ENCODE measurements at regions of chr3 and their contacts with region 1.

Region 1: DNA sequence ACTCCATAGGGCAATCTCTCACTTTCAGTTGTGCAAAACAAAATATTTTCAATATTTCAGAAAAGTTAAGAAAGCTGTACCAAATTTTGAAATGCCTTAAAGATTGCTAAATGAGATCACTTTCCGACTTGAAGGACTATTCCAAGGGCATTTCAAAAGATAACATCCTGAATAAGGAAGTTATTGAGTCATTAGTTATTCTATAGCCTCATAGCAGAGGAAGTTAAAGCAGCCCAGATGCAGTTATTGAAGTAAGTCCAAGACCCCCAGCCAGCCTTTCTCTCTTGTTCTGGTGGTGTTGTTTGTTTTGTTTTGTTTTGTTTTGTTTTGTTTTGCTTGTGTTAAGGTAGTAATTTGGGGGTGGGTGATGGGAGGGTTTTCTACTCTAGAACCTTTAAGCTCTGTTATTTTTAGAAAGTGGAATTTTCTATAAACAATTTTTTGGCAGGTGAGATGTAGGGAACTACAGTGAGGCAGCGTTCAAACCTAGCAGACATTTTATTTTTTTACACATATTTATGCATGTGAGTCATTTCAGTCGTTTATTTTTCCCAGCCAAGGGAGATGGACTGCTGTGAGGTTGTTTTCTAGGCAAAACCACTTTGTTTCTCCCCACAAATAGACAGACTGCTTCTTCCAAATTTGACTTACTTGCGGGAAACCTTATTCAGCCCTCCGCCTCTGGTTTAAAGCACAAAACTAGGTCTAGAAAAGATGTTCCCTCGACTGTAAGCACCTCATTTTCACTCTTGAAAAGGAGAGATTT is 216.3 kb upstream of the ARPP21 start:
- DNase-seq: peak; percentile 81
- H3K4me3 ChIP-seq: peak overlapping the region in 1 of 3 experiments; percentile 18
- H3K27ac ChIP-seq: peak overlapping the region; percentile 32
- H3K4me1 ChIP-seq: peaks cover 16% of the 10 kb centered on the region
- H3K27me3 ChIP-seq: peaks cover 18 to 20% of the 10 kb centered on the region in 2 experiments
- CTCF ChIP-seq: no peak
- POLR2A ChIP-seq: no peak

Region 2: DNA sequence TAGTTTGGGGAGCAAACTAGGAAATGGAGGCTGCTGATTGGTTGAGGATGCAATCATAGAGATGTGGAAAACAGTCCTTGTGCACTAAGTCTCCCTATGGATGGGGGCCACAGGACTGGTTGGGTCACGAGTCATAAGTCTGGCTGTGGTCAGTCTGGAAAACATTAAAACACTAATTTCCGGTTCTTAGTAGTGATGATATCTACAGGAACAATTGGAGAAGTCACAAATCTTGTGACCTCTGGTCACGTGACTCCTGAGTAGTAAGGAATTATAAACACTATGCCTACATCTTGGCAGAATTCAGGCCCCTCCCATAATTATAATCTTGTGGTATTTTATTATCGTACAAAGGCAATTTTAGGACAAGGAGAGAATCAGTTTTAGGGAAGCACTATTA is 100.9 kb before region 1 on chr3:
- CTCF ChIA-PET with region 1: no interaction called
- POLR2A ChIA-PET with region 1: no interaction called
- dilution Hi-C with region 1: no loop called
- intact Hi-C with region 1: loop called (anchors 2 kb)
- DNase-seq: peak; percentile 37
- H3K4me3 ChIP-seq: no peak overlapping the region
- H3K27ac ChIP-seq: no peak overlapping the region
- H3K4me1 ChIP-seq: peaks cover 4% of the 10 kb centered on the region
- H3K27me3 ChIP-seq: peaks cover 3 to 9% of the 10 kb centered on the region in 2 experiments
- CTCF ChIP-seq: no peak
- POLR2A ChIP-seq: no peak

Region 3: DNA sequence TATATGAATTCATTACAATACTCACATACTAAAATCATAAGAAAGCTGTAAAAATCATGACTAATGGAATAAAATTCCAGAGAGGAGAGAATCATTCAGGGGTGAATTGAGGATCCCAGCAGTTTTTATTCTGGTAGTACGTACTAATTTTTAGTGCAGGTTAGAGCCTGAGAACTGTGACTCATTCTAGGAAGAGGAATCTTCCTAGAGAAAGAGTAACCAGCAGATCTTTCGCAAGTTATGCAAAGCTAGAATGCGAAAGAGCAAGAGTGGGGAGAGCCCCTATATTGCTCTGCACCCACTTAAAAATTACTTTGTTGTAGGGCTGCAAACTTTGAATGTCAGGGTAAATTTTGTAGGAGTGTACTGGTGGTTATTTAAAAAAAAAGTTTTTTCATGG is 87.3 kb before region 1 on chr3:
- CTCF ChIA-PET with region 1: no interaction called
- POLR2A ChIA-PET with region 1: no interaction called
- dilution Hi-C with region 1: no loop called
- intact Hi-C with region 1: loop called (anchors 5 kb)
- DNase-seq: no peak
- H3K4me3 ChIP-seq: no peak overlapping the region
- H3K27ac ChIP-seq: no peak overlapping the region
- H3K4me1 ChIP-seq: peaks cover 13% of the 10 kb centered on the region
- H3K27me3 ChIP-seq: no peaks in the 10 kb centered on the region
- CTCF ChIP-seq: no peak
- POLR2A ChIP-seq: no peak

Region 4: DNA sequence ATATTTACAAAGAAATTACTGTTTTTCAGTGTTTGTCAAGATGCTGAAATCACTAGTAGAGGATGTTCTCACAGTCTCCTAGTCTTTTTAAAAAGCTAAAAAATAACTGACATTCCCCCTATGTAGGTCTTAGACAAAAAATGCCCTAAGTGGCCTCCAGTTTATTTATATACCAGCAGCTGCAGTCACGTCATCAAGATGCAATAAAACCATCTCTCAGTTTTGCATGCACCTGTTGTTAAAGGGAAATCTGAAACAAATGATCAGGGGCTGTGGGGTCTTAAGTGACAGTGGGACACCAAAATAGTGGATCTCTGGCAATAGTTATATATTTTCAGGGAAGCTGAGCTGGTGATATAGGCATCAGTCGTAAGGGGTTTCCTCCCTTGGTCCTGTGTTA is 69.8 kb after region 1 on chr3:
- CTCF ChIA-PET with region 1: no interaction called
- POLR2A ChIA-PET with region 1: no interaction called
- dilution Hi-C with region 1: no loop called
- intact Hi-C with region 1: no loop called
- DNase-seq: no peak
- H3K4me3 ChIP-seq: no peak overlapping the region
- H3K27ac ChIP-seq: no peak overlapping the region
- H3K4me1 ChIP-seq: no peaks in the 10 kb centered on the region
- H3K27me3 ChIP-seq: peaks cover 0 to under 1% of the 10 kb centered on the region in 2 experiments
- CTCF ChIP-seq: no peak
- POLR2A ChIP-seq: no peak

Region 5: DNA sequence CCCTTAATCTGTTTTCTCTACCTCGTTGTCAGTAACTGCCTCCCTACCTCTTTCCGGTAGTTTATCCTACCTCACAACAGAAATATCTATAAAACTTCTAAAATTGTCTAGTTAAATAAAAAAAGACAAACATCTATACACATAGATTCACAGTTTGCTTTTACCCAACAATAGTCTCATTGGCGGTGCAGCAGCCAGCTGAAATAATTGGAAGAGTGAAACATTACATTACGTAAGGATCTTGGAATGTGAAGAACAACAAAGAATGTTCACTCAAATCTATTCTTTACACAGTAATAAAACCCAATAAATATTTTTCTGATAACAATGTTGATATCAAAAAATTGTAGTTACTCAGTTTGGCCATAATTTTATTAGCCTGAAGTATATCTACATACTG is 100.8 kb after region 1 on chr3:
- CTCF ChIA-PET with region 1: no interaction called
- POLR2A ChIA-PET with region 1: no interaction called
- dilution Hi-C with region 1: no loop called
- intact Hi-C with region 1: loop called (anchors 2 kb)
- DNase-seq: peak; percentile 66
- H3K4me3 ChIP-seq: no peak overlapping the region
- H3K27ac ChIP-seq: peak overlapping the region; percentile 68
- H3K4me1 ChIP-seq: peaks cover 10% of the 10 kb centered on the region
- H3K27me3 ChIP-seq: no peaks in the 10 kb centered on the region
- CTCF ChIP-seq: no peak
- POLR2A ChIP-seq: no peak

Measured in endothelial cell of umbilical vein (primary cell).